ENCODE measurements at regions of chr3 and their contacts with region 1.

Region 1: GRCh38 chr3:157606011-157606851 is 103.0 kb upstream of the VEPH1 start:
- DNase-seq: peak; percentile 5 to 67 (median 55)
- ATAC-seq: peak; percentile 77
- H3K4me3 ChIP-seq: no peak overlapping the region
- H3K4me3 Mint-ChIP-seq: no peak overlapping the region
- H3K27ac ChIP-seq: no peak overlapping the region
- H3K27ac Mint-ChIP-seq: no peak overlapping the region
- H3K4me1 ChIP-seq: no peaks in the 10 kb centered on the region
- H3K4me1 Mint-ChIP-seq: peaks cover 8% of the 10 kb centered on the region
- H3K27me3 ChIP-seq: no peaks in the 10 kb centered on the region
- H3K27me3 Mint-ChIP-seq: peaks cover 6% of the 10 kb centered on the region
- CTCF ChIP-seq: peak; percentile 80

Region 2: DNA sequence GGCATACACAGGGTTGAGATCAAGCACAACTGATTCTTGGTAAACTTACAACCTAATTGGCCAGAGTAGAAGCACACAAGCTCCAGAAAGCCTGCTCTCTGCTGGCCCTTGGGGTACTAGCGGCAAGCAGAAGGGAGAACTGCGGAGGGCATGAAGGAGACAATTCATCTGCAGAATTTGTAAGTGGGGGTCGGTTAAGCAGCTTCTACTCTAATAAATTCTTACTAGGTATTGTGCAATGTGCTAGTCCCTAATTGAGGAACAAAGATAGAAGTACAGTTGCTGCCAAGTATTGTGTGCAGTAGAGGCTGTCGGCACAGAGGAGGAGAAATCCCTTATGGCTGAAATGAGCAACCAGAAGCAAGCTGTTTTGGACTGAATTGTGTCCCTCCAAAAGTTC is 11.8 kb before region 1 on chr3:
- CTCF ChIA-PET with region 1: interaction called, 11 read pairs
- POLR2A ChIA-PET with region 1: no interaction called
- intact Hi-C with region 1: no loop called
- DNase-seq: no peak
- ATAC-seq: no peak
- H3K4me3 ChIP-seq: no peak overlapping the region
- H3K4me3 Mint-ChIP-seq: no peak overlapping the region
- H3K27ac ChIP-seq: no peak overlapping the region
- H3K27ac Mint-ChIP-seq: no peak overlapping the region
- H3K4me1 ChIP-seq: no peaks in the 10 kb centered on the region
- H3K4me1 Mint-ChIP-seq: no peaks in the 10 kb centered on the region
- H3K27me3 ChIP-seq: no peaks in the 10 kb centered on the region
- H3K27me3 Mint-ChIP-seq: peaks cover 16% of the 10 kb centered on the region
- CTCF ChIP-seq: no peak

Region 3: DNA sequence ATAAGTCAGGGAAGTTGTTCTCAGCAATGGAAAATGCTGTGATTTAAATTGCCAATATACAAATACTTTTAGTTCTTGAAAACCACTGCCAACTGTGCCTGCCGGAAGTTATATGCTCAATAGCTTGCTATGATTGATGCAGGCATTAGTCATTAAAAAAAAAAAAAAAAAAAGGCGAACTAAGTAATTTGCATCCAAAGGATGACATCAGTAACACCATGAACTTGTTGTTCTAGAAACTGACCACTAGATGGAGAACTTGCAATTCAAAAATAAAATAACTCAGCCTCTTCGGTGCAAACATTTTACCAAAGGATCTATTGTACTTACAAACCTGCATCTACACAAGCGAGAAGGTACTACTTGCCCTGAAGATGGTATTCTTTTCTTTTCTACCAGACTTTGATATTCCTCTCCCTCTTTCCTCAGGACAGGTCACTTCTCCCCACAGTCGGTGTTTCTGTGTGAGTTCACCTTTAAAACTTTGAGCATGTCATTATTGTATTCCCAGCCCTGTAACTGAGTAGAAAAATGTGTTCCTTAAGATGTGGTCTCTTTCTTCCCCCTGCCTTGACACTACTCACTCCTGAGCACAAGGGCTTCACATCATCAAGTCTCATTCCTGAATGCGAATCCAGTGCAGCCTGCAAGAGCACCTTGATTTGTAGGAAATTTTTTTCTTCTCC is 12.0 kb after region 1 on chr3:
- CTCF ChIA-PET with region 1: interaction called, 10 read pairs
- POLR2A ChIA-PET with region 1: no interaction called
- intact Hi-C with region 1: no loop called
- DNase-seq: peak in 3 of 9 experiments; percentile 23 to 57 (median 48)
- ATAC-seq: peak; percentile 73
- H3K4me3 ChIP-seq: no peak overlapping the region
- H3K4me3 Mint-ChIP-seq: no peak overlapping the region
- H3K27ac ChIP-seq: no peak overlapping the region
- H3K27ac Mint-ChIP-seq: no peak overlapping the region
- H3K4me1 ChIP-seq: no peaks in the 10 kb centered on the region
- H3K4me1 Mint-ChIP-seq: peaks cover 5% of the 10 kb centered on the region
- H3K27me3 ChIP-seq: no peaks in the 10 kb centered on the region
- H3K27me3 Mint-ChIP-seq: peaks cover 5% of the 10 kb centered on the region
- CTCF ChIP-seq: peak; percentile 61

Region 4: DNA sequence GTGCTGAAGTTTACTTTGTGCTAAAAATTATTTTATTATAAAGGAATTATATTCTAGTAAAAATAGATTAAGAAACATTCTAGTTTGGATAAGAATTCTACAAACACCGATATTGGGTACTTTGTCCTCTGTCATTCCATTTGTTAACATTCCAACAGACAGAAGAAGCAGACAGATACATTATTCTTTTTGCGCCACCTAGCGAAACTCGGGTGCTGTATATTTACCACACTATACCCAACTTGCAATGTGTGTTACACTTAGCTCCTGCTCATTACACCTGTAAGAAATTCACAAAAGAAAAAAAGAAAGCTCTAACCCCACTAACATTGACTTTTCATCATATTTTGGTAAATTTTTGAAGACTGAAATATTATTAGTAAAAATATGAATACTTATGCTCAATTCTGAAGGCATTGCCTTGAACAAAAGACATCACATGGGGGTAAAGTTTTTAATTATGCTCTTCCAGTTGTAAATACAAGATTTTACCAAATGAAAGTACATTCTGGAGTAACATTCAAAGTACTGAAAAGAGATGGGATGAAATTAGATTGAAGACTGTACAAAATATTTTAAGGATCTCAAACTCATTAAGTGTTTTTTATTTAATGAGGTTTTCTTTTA is 828.3 kb after region 1 on chr3:
- CTCF ChIA-PET with region 1: interaction called, 20 read pairs
- POLR2A ChIA-PET with region 1: no interaction called
- intact Hi-C with region 1: loop called in 1 of 2 experiments (anchors 1 kb)
- DNase-seq: peak in 4 of 9 experiments; percentile 11 to 49 (median 28)
- ATAC-seq: no peak
- H3K4me3 ChIP-seq: no peak overlapping the region
- H3K4me3 Mint-ChIP-seq: no peak overlapping the region
- H3K27ac ChIP-seq: no peak overlapping the region
- H3K27ac Mint-ChIP-seq: no peak overlapping the region
- H3K4me1 ChIP-seq: no peaks in the 10 kb centered on the region
- H3K4me1 Mint-ChIP-seq: no peaks in the 10 kb centered on the region
- H3K27me3 ChIP-seq: no peaks in the 10 kb centered on the region
- H3K27me3 Mint-ChIP-seq: no peaks in the 10 kb centered on the region
- CTCF ChIP-seq: peak; percentile 59

Region 5: DNA sequence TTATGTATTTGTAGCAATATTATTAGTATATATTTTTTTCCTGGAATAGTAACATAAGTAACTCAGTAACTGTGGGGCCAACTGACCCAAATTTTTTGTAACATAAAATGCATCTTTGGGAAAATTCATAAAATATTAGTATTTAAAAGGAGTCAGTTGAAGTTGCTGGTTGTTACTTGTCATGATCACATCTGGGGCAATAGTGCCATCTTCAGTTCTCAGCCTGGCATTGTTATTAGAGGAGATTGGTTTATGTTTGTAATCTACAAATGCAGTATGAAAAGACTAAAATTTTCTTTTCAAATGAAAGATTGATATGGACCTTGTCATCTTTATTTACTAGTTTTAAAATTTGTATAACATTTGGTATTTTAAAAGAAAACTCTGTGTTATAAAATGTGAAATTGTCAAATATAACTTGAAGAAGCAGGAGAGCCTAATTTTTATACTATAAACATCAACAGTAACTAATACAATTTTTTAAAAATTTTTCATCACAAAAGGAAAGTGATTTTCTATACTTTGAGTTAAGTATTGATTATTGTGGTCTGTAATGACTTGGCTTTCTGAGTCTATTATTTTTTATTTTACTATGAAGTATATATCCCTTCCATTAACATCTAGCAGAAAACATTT is 926.0 kb after region 1 on chr3:
- CTCF ChIA-PET with region 1: interaction called, 3 read pairs
- POLR2A ChIA-PET with region 1: no interaction called
- intact Hi-C with region 1: loop called in 1 of 2 experiments (anchors 2 kb)
- DNase-seq: peak in 2 of 9 experiments; percentile 23 to 37
- ATAC-seq: no peak
- H3K4me3 ChIP-seq: no peak overlapping the region
- H3K4me3 Mint-ChIP-seq: no peak overlapping the region
- H3K27ac ChIP-seq: no peak overlapping the region
- H3K27ac Mint-ChIP-seq: no peak overlapping the region
- H3K4me1 ChIP-seq: no peaks in the 10 kb centered on the region
- H3K4me1 Mint-ChIP-seq: no peaks in the 10 kb centered on the region
- H3K27me3 ChIP-seq: no peaks in the 10 kb centered on the region
- H3K27me3 Mint-ChIP-seq: no peaks in the 10 kb centered on the region
- CTCF ChIP-seq: peak; percentile 44

Measured in CD8-positive, alpha-beta T cell (primary cell).